Caco-2 (cell line): ENCODE measurements at regions of chr15 and their contacts with region 1.

Region 1: DNA sequence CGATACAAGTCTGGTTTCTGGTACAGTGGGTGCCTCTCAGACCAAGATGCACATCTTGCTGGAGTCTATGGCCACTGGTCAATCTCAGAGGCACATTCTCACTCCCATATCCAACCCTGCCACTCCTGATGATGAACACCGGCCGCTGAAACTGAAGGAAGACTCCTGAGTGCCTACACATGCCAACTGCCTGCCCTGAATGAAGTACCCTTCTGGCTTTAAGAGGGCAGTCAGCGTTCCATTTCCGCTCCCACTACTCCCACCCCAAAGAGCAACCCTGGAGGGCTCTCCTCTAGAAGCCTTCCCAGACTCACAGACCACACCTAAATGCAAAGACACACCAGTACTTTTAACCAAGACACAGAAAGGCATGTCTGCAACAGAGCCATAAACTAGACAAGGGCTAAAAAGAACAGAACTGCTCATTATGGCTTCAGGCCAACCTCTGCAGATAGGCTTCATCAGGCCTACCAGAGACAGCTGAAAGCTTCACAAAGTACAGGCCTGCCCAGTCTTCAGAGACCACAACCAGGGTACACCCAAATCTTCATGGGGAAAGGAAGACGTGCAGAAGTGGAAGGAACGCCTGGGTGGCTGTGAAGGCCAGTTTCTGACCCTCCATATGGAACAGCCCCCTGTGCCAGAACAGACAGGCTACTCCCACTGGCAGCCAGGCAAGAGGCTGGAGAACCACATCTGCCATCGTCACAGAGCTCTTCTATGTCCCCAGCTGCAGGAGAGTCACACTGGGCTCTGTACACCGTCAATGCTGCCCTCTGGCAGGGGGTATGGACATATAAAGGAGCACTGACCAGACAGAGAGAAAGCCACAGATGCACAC is 14.3 kb downstream of the ANP32A start:
- DNase-seq: no peak
- H3K4me3 ChIP-seq: no peak overlapping the region
- H3K4me3 Mint-ChIP-seq: no peak overlapping the region
- H3K27ac Mint-ChIP-seq: peak overlapping the region; percentile 40
- H3K4me1 ChIP-seq: no peaks in the 10 kb centered on the region
- H3K4me1 Mint-ChIP-seq: peaks cover 10% of the 10 kb centered on the region
- H3K27me3 ChIP-seq: no peaks in the 10 kb centered on the region
- H3K27me3 Mint-ChIP-seq: no peaks in the 10 kb centered on the region
- CTCF ChIP-seq: no peak

Region 2: DNA sequence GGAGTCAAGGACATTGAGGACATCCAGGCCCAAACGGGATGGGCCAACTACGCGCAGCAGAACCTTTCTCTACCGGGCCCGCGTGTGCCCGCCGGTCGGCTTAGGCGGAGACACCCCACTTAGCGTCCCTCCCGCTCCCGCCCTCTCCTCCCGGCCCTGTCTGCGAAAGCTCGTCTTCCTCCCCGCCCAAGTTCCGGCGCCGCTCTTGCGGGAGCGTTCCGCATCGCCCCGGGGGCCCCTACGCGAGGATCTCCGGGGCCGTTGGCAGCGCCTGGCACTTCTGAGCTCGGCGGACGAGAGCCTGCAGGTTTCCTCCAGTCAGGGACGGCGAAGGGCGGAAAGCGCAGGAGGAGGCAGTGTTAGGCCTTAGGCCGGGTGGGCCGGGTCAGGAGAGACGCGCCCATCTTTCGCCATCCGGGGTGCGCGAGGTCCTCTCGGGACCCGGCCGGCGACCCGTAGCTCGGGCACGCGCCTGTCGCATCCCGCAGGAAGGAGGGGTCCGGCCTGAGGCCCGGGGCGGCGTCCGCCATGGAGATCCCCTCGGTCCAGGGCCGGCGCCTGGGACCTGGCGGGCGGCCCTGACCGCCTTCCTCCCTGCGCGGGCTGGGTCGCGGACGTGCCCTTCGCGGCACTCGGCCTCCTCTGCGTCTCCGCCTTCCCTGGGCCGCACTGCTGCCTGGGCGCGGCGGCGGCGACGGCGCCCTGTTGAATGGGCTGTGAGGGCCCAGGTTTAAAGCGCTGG is 528.7 kb before region 1 on chr15 and contains the start of gene FEM1B:
- CTCF ChIA-PET with region 1: no interaction called
- POLR2A ChIA-PET with region 1: interaction called, 10 read pairs
- intact Hi-C with region 1: no loop called
- DNase-seq: peak; percentile 90 to 91
- H3K4me3 ChIP-seq: peak within 1 kb of the TSS; percentile 61
- H3K4me3 Mint-ChIP-seq: peak within 1 kb of the TSS; percentile 95
- H3K27ac Mint-ChIP-seq: peak within 1 kb of the TSS; percentile 93
- H3K4me1 ChIP-seq: peaks cover 45% of the 10 kb centered on the region
- H3K4me1 Mint-ChIP-seq: peaks cover 50% of the 10 kb centered on the region
- H3K27me3 ChIP-seq: no peaks in the 10 kb centered on the region
- H3K27me3 Mint-ChIP-seq: no peaks in the 10 kb centered on the region
- CTCF ChIP-seq: no peak
- total RNA-seq, gene FEM1B: 33.5 and 41.0 TPM in 2 replicates

Region 3: DNA sequence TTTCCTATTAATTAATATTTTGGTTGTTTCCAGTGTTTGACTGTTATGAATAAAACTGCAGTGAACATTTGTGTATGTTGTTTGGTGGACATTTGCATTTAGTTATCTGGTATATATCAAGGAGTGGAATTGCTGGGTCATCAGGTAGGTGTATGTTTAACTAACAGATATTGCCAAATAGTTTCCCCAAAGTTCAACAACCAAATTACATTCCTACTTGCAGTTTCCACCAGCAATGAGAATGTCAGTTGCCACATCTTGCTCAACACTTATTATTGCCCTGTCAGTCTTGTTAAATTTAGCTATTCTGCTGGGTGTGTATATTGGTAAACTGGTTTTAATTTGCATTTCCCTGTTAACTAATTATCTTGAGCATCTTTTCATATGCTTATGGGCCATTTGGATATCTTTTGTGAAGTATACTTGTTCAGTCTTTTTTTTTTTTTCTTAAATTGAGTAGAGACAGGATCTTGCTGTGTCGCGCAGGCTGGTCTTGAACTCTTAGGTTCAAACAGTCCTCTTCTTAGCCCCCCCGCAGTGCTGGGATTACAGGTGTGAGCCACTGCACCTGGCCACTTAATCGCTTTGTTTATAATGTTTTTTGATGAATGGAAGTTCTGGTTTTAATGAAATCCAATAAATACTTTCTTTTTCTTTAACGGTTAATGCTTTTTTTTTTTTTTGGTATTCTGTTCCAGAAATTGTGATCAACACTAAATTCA is 521.0 kb before region 1 on chr15:
- CTCF ChIA-PET with region 1: no interaction called
- POLR2A ChIA-PET with region 1: interaction called, 11 read pairs
- intact Hi-C with region 1: no loop called
- DNase-seq: peak in 1 of 2 experiments; percentile 39
- H3K4me3 ChIP-seq: no peak overlapping the region
- H3K4me3 Mint-ChIP-seq: no peak overlapping the region
- H3K27ac Mint-ChIP-seq: no peak overlapping the region
- H3K4me1 ChIP-seq: peaks cover 12% of the 10 kb centered on the region
- H3K4me1 Mint-ChIP-seq: peaks cover 11% of the 10 kb centered on the region
- H3K27me3 ChIP-seq: no peaks in the 10 kb centered on the region
- H3K27me3 Mint-ChIP-seq: no peaks in the 10 kb centered on the region
- CTCF ChIP-seq: no peak

Region 4: GRCh38 chr15:68589783-68590710 is 216.4 kb before region 1 on chr15:
- CTCF ChIA-PET with region 1: no interaction called
- POLR2A ChIA-PET with region 1: no interaction called
- intact Hi-C with region 1: no loop called
- DNase-seq: no peak
- H3K4me3 ChIP-seq: no peak overlapping the region
- H3K4me3 Mint-ChIP-seq: no peak overlapping the region
- H3K27ac Mint-ChIP-seq: no peak overlapping the region
- H3K4me1 ChIP-seq: peaks cover 17% of the 10 kb centered on the region
- H3K4me1 Mint-ChIP-seq: peaks cover 15% of the 10 kb centered on the region
- H3K27me3 ChIP-seq: no peaks in the 10 kb centered on the region
- H3K27me3 Mint-ChIP-seq: peaks cover 4% of the 10 kb centered on the region
- CTCF ChIP-seq: no peak

Region 5: GRCh38 chr15:68833700-68834331 is 27.4 kb after region 1 on chr15:
- CTCF ChIA-PET with region 1: no interaction called
- POLR2A ChIA-PET with region 1: no interaction called
- intact Hi-C with region 1: no loop called
- DNase-seq: no peak
- H3K4me3 ChIP-seq: no peak overlapping the region
- H3K4me3 Mint-ChIP-seq: no peak overlapping the region
- H3K27ac Mint-ChIP-seq: no peak overlapping the region
- H3K4me1 ChIP-seq: no peaks in the 10 kb centered on the region
- H3K4me1 Mint-ChIP-seq: no peaks in the 10 kb centered on the region
- H3K27me3 ChIP-seq: no peaks in the 10 kb centered on the region; the same call in 1 of the 2 replicates
- H3K27me3 Mint-ChIP-seq: peaks cover 7% of the 10 kb centered on the region
- CTCF ChIP-seq: no peak

Region 6: DNA sequence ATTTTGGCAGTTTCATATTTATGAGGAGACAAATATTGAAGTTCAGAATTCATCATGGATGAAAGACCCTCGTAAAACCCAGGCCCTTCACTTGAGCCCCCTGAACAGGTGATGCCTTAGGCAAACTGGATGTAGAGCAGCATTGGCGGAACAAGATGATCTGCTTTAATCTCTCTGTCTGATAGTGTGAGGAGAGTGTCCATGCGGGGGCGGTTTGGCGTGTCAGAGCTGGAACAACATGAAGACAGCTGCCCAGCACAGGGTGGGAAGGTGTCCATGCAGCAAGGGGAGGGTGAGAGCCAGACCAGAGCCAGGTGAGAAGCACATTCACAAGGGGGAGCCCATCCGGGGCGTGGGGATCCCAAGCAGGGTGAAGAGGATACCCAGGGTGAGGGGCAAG is 46.0 kb after region 1 on chr15:
- CTCF ChIA-PET with region 1: no interaction called
- POLR2A ChIA-PET with region 1: no interaction called
- intact Hi-C with region 1: no loop called
- DNase-seq: no peak
- H3K4me3 ChIP-seq: no peak overlapping the region
- H3K4me3 Mint-ChIP-seq: no peak overlapping the region
- H3K27ac Mint-ChIP-seq: peak overlapping the region; percentile 54
- H3K4me1 ChIP-seq: no peaks in the 10 kb centered on the region
- H3K4me1 Mint-ChIP-seq: no peaks in the 10 kb centered on the region
- H3K27me3 ChIP-seq: no peaks in the 10 kb centered on the region
- H3K27me3 Mint-ChIP-seq: peaks cover 13% of the 10 kb centered on the region
- CTCF ChIP-seq: no peak